Endothelial cell of umbilical vein (primary cell): ENCODE measurements at regions of chr7 and their contacts with region 1.

Region 1: GRCh38 chr7:2709553-2710285 is 21.7 kb downstream of the AMZ1 start:
- DNase-seq: peak; percentile 54
- H3K4me3 ChIP-seq: no peak overlapping the region
- H3K27ac ChIP-seq: no peak overlapping the region
- H3K4me1 ChIP-seq: no peaks in the 10 kb centered on the region
- H3K27me3 ChIP-seq: no peaks in the 10 kb centered on the region
- CTCF ChIP-seq: peak; percentile 93 to 99
- POLR2A ChIP-seq: no peak

Region 2: GRCh38 chr7:2451171-2452073 is 258.3 kb before region 1 on chr7:
- CTCF ChIA-PET with region 1: interaction called, 20 read pairs
- POLR2A ChIA-PET with region 1: no interaction called
- dilution Hi-C with region 1: no loop called
- intact Hi-C with region 1: no loop called
- DNase-seq: peak; percentile 63
- H3K4me3 ChIP-seq: no peak overlapping the region
- H3K27ac ChIP-seq: no peak overlapping the region
- H3K4me1 ChIP-seq: peaks cover 5% of the 10 kb centered on the region
- H3K27me3 ChIP-seq: no peaks in the 10 kb centered on the region
- CTCF ChIP-seq: peak; percentile 95 to 97
- POLR2A ChIP-seq: no peak

Region 3: DNA sequence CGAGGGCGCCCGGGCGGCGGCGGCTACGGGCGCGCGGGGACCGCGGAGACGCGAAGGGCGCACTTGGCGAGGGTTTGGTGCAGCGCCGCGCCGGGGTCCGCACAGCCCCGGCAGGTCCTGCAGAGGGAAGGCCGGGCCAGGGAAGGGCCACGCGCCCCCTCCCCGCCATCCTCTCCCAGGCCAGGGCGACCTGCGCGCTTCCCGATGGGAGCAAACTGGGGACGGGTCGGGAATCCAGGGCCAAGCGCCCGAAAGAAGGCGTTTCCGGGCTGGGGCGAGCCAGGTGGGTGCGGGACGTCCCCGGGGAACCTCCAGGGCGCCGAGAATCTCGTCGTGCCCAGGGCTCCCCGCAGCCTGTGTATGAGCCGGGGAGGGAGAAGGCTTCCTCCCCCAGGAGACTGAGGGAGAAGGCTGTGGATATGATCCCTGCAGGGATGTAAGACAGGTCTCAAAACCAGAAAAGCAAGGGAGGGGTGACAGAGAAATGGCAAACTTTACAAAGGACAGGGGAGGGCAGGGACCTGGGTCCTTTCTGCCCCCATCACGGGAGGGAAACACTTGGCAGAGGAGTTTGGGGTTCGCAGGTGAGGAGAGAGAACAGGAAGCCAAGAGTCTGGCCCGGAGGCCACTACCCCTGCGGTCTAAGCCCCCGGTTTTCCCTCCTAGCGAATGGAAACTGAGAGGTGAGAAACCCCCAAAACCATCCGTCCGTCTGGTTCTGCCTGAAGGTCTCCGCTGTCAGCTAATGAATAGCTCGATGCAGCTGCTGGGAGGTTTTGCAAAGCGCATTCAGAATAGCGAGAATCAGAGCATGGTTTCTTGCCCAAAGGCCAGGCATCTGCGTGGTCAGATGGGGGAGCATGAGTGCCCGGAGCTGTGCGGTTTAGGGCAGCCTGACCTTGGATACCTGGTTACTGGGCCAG is 21.0 kb before region 1 on chr7:
- CTCF ChIA-PET with region 1: interaction called, 11 read pairs
- POLR2A ChIA-PET with region 1: no interaction called
- dilution Hi-C with region 1: no loop called
- intact Hi-C with region 1: no loop called
- DNase-seq: no peak
- H3K4me3 ChIP-seq: no peak overlapping the region
- H3K27ac ChIP-seq: no peak overlapping the region
- H3K4me1 ChIP-seq: peaks cover 3% of the 10 kb centered on the region
- H3K27me3 ChIP-seq: peaks cover 20 to 26% of the 10 kb centered on the region in 2 experiments
- CTCF ChIP-seq: no peak
- POLR2A ChIP-seq: no peak

Region 4: GRCh38 chr7:2725515-2726105 is 15.9 kb after region 1 on chr7:
- CTCF ChIA-PET with region 1: interaction called, 12 read pairs
- POLR2A ChIA-PET with region 1: no interaction called
- dilution Hi-C with region 1: no loop called
- intact Hi-C with region 1: no loop called
- DNase-seq: no peak
- H3K4me3 ChIP-seq: no peak overlapping the region
- H3K27ac ChIP-seq: no peak overlapping the region
- H3K4me1 ChIP-seq: no peaks in the 10 kb centered on the region
- H3K27me3 ChIP-seq: no peaks in the 10 kb centered on the region
- CTCF ChIP-seq: no peak
- POLR2A ChIP-seq: no peak

Region 5: GRCh38 chr7:2757904-2758672 is 48.4 kb after region 1 on chr7:
- CTCF ChIA-PET with region 1: interaction called, 17 read pairs
- POLR2A ChIA-PET with region 1: no interaction called
- dilution Hi-C with region 1: no loop called
- intact Hi-C with region 1: no loop called
- DNase-seq: peak; percentile 93
- H3K4me3 ChIP-seq: peak overlapping the region in 1 of 3 experiments; percentile 20
- H3K27ac ChIP-seq: peak overlapping the region; percentile 81
- H3K4me1 ChIP-seq: peaks cover 27% of the 10 kb centered on the region
- H3K27me3 ChIP-seq: no peaks in the 10 kb centered on the region
- CTCF ChIP-seq: no peak
- POLR2A ChIP-seq: no peak

Region 6: DNA sequence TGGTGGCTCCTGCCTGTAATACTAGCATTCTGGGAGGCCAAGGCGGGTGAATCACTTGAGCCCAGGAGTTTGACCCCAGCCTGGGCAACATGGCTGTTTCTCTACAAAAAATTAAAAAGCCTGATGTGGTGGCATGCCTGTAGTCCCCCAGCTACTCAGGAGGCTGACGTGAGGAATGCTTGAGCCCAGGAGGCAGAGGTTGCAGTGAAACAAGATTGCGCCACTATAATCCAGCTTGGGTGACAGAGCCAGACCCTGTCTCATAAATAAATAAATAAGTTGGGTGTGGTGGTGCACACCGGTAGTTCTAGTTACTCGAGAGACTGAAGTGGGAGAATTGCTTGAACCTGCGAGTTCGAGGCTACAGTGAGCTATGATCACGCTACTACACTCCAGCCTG is 69.4 kb after region 1 on chr7:
- CTCF ChIA-PET with region 1: no interaction called
- POLR2A ChIA-PET with region 1: no interaction called
- dilution Hi-C with region 1: no loop called
- intact Hi-C with region 1: no loop called
- DNase-seq: no peak
- H3K4me3 ChIP-seq: no peak overlapping the region
- H3K27ac ChIP-seq: no peak overlapping the region
- H3K4me1 ChIP-seq: peaks cover 5% of the 10 kb centered on the region
- H3K27me3 ChIP-seq: no peaks in the 10 kb centered on the region
- CTCF ChIP-seq: no peak
- POLR2A ChIP-seq: no peak